ENCODE measurements at regions of chr1 and their contacts with region 1.

Region 1: DNA sequence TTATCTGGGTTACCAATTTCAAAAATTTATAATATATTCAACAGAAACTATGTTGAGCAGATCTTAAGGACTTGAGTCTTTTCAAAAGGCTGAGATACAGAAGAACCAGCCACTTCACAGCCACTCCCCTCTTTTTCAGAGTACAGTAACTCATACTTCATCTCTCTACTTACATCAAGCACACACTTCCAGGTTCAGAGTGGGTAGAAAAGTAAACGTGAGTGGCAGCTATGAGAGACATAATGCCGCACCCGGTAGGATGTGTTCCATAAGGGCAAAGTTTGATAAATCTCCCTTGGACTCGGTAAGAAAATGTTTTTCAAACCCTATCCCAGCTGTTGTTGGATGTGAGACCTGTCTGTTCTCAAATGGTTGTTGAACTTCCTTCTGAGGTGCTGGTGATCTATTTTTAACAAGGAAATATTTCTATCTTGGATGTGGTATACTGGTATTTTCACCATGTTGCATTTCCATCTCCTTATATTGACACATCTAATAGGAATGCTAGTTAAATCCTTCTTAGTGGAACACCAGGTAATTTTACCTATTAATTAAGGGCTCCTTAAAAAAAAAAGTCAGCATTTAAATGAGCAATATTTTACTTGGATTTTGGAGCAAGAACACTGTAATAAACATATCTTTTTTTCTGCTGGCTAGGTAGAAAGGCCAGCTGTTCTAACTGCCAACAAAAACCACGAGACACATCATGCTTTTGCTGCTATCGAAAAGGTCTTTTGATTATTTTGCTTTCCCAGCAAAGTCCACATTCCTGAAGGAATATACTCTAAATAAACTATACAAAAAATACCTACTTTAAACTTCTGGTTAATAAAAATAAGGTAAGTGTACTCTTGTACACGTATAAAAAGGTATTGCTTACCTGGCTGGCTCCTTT is 28.2 kb downstream of the CNN3 start:
- DNase-seq: no peak
- ATAC-seq: no peak
- H3K4me3 ChIP-seq: no peak overlapping the region
- H3K27ac ChIP-seq: no peak overlapping the region
- H3K4me1 ChIP-seq: peaks cover 0 to 26% (median 6%) of the 10 kb centered on the region in 9 donors
- H3K27me3 ChIP-seq: no peaks in the 10 kb centered on the region
- CTCF ChIP-seq: no peak

Region 2: DNA sequence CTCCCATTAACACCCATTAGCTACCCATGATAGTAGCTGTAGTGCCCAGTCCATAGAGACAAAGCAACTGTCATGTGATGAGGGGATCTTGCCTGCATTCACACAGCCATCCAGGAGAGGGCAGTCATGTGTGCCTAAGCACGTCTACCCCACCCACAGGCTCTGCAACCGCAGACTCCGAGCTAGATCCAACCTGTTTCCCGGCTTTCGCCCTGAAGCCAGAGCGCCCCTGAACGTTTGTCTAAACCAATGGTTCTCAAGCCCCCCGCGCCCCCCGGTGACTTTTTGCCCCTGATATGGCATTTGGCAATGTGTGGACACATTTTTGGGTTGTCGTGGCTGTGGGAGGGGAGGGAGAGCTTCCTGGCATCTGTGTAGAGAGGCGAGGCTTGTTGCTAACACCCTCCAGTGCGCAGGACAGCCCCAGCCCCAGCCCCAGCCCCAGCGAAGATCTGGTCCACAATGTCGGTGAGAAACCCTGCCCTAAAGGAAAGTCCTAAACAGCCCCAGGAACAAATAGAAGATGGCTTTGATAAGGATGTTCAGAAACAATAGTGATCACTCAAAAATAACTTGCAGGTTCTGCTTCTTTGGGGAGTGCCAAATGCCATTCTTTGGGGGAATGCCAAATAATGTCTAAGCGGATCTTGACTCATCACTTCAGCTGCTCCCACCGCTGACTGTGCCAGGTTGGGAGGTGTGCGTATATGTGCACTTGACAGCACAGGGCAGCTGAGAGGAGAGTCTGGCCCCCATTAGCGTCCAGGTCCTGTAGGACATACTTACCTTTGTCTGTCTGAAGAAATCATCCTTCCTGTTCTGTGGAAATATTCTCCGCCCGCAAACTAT is 44.1 kb before region 1 on chr1:
- intact Hi-C with region 1: loop called in 1 of 10 experiments (anchors 5 kb)
- DNase-seq: peak; percentile 80 to 91
- ATAC-seq: peak; percentile 93 to 97 (median 95)
- H3K4me3 ChIP-seq: peak overlapping the region in 9 of 10 donors; percentile 18 to 56 (median 50)
- H3K27ac ChIP-seq: peak overlapping the region; percentile 14 to 81 (median 74)
- H3K4me1 ChIP-seq: peaks cover 0 to 45% (median 15%) of the 10 kb centered on the region in 9 donors
- H3K27me3 ChIP-seq: no peaks in the 10 kb centered on the region
- CTCF ChIP-seq: peak; percentile 81 to 98 (median 93)

Measured in heart right ventricle (tissue), 16 donors.